ENCODE measurements at regions of chr11 and their contacts with region 1.

Region 1: DNA sequence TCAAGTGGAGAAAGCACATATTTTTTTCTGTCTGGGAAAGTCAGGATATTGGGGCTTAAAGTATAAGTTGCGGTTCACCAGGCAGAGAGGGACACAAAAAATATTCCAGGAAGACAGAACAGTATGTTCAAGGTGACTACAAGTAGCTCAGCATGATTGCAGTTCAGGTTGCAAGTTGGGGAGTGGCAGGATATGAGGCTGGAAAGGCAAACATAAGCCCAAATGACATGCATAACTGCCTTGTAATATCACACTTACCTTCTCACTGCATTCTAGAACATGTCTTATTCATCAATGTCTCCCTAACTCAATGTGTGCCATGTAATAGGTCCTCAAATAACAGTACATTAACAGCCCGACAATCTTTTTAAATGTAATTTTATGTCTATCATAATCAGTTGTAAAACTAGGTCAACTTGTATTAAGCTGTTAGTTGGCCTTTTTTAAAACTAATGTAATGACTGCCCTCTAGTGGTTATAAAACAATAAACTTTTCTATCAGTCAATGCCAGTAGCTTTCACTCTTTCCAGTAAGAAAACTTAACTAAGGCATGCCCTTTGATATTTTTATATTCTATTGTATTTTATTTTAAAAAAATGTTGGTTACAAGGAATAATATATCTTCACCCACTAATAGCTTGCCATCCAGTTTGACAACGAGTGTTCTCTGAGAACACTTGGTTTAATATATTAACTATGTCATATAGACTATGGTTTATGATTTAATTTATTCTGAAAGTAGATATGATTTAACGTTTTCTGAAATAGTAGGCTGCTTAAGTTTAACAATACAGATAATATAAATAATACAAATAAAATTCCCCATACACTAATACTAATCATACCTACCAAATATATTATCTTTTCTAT is 39.4 kb upstream of the CFAP300 start:
- DNase-seq: peak; percentile 25 to 95
- ATAC-seq: peak; percentile 88 to 96
- H3K4me3 ChIP-seq: no peak overlapping the region
- H3K27ac ChIP-seq: peak overlapping the region; percentile 84 to 85
- H3K4me1 ChIP-seq: peaks cover 44% of the 10 kb centered on the region
- CTCF ChIP-seq: peak; percentile 66
- EP300 ChIP-seq: peak; percentile 12 to 63; a peak in 2 of 5 replicates
- POLR2A ChIP-seq: no peak
- RAD21 ChIP-seq: peak; percentile 63 to 79

Region 2: DNA sequence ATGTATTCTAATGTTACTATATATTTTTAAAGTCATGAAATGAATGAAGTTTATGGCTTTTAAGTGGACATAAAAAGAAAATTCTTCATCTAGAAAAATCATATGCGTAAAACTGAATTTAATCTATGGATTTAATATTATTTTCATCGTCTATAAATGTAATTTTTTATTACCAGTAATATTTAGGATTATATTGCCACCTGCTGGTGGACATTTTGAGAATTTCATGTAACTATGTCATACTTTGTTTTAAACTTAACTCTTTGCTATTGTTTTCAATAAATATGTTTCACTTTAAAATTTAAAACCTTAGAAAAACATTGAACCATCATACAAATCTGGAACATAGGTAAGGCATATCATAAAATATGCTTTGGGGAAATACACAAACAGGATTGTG is 159.5 kb before region 1 on chr11:
- CTCF ChIA-PET with region 1: interaction called, 19 read pairs
- POLR2A ChIA-PET with region 1: no interaction called
- DNase-seq: peak in 1 of 2 experiments; percentile 16
- ATAC-seq: no peak
- H3K4me3 ChIP-seq: no peak overlapping the region
- H3K27ac ChIP-seq: no peak overlapping the region
- H3K4me1 ChIP-seq: no peaks in the 10 kb centered on the region
- CTCF ChIP-seq: peak; percentile 43; the same call in 1 of the 3 replicates
- EP300 ChIP-seq: no peak
- POLR2A ChIP-seq: no peak
- RAD21 ChIP-seq: peak; percentile 67 to 82

Region 3: GRCh38 chr11:101860696-101861427 is 146.9 kb before region 1 on chr11:
- CTCF ChIA-PET with region 1: interaction called, 112 read pairs
- POLR2A ChIA-PET with region 1: interaction called, 8 read pairs
- DNase-seq: peak; percentile 37 to 70
- ATAC-seq: peak; percentile 93
- H3K4me3 ChIP-seq: no peak overlapping the region
- H3K27ac ChIP-seq: peak overlapping the region; percentile 72 to 82; a peak in 5 of 6 replicates
- H3K4me1 ChIP-seq: peaks cover 29% of the 10 kb centered on the region
- CTCF ChIP-seq: peak; percentile 65
- EP300 ChIP-seq: no peak
- POLR2A ChIP-seq: no peak
- RAD21 ChIP-seq: peak; percentile 75 to 77

Region 4: GRCh38 chr11:101880222-101880621 is 127.6 kb before region 1 on chr11:
- CTCF ChIA-PET with region 1: interaction called, 10 read pairs
- POLR2A ChIA-PET with region 1: no interaction called
- DNase-seq: peak in 1 of 2 experiments; percentile 81
- ATAC-seq: peak in 1 of 2 experiments; percentile 62; a peak in 2 of 6 replicates
- H3K4me3 ChIP-seq: no peak overlapping the region
- H3K27ac ChIP-seq: peak overlapping the region; percentile 20 to 59; a peak in 3 of 6 replicates
- H3K4me1 ChIP-seq: no peaks in the 10 kb centered on the region
- CTCF ChIP-seq: peak; percentile 48
- EP300 ChIP-seq: no peak
- POLR2A ChIP-seq: no peak
- RAD21 ChIP-seq: peak; percentile 43 to 65

Region 5: GRCh38 chr11:101914738-101915426 is 92.9 kb before region 1 on chr11 and contains the start of gene CEP126:
- CTCF ChIA-PET with region 1: interaction called, 20 read pairs
- POLR2A ChIA-PET with region 1: interaction called, 11 read pairs
- DNase-seq: peak; percentile 76 to 94
- ATAC-seq: peak; percentile 94
- H3K4me3 ChIP-seq: peak within 1 kb of the TSS; percentile 49
- H3K27ac ChIP-seq: peak within 1 kb of the TSS; percentile 77 to 89
- H3K4me1 ChIP-seq: peaks cover 34% of the 10 kb centered on the region
- CTCF ChIP-seq: 0 out of 3 replicates have a peak, but pooled peaks have one; percentile 14
- EP300 ChIP-seq: no peak
- POLR2A ChIP-seq: peak; percentile 25; the same call in 1 of the 2 replicates
- RAD21 ChIP-seq: peak in 1 of 2 experiments; percentile 12; a peak in 2 of 5 replicates
- polyA plus RNA-seq, gene CEP126: 6.9 and 8.7 TPM in 2 replicates

Region 6: DNA sequence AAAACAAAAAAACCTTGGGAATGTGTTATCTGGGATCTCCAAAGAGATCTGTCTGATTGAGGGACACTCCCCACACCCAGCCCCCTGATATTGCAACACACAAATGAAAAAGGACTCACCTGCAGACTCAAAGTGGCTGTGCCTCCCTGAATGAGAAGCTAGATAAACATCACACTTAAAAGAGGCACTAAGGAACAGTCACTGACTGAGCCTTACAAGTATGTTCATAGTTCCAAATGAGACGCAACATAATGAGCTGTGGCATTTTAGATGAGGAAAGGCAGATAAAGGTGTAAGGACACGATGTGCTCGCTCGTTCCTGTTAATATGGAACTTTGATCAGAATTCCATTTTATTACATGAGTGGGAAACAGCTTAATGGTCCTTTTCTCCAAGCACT is 18.4 kb after region 1 on chr11:
- CTCF ChIA-PET with region 1: interaction called, 12 read pairs
- POLR2A ChIA-PET with region 1: no interaction called
- DNase-seq: no peak
- ATAC-seq: no peak
- H3K4me3 ChIP-seq: no peak overlapping the region
- H3K27ac ChIP-seq: no peak overlapping the region
- H3K4me1 ChIP-seq: peaks cover 9% of the 10 kb centered on the region; the same call in 1 of the 3 replicates
- CTCF ChIP-seq: no peak
- EP300 ChIP-seq: no peak
- POLR2A ChIP-seq: no peak
- RAD21 ChIP-seq: no peak

Region 7: DNA sequence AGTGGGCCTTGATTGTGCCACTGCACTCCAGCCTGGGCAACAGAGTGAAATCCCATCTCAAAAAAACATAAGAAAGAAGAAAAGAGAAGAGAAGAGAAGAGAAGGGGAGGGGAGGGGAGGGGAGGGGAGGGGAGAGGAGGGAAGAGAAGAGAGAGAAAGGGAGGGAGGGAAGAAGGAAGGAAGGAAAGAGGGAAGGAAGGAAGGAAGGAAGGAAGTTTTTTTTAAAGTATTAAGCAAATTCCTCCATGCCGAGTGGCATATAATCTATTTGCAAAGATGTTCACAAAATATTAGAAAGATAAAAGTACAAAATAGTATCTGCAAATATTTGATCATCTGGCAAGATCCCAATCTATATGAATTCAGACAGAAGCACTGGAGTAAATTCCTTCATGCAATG is 29.0 kb after region 1 on chr11:
- CTCF ChIA-PET with region 1: no interaction called
- POLR2A ChIA-PET with region 1: no interaction called
- DNase-seq: no peak
- ATAC-seq: no peak
- H3K4me3 ChIP-seq: no peak overlapping the region
- H3K27ac ChIP-seq: no peak overlapping the region
- H3K4me1 ChIP-seq: no peaks in the 10 kb centered on the region
- CTCF ChIP-seq: no peak
- EP300 ChIP-seq: no peak
- POLR2A ChIP-seq: no peak
- RAD21 ChIP-seq: no peak